Panc1 (cell line): ENCODE measurements at regions of chr14 and their contacts with region 1.

Region 1: DNA sequence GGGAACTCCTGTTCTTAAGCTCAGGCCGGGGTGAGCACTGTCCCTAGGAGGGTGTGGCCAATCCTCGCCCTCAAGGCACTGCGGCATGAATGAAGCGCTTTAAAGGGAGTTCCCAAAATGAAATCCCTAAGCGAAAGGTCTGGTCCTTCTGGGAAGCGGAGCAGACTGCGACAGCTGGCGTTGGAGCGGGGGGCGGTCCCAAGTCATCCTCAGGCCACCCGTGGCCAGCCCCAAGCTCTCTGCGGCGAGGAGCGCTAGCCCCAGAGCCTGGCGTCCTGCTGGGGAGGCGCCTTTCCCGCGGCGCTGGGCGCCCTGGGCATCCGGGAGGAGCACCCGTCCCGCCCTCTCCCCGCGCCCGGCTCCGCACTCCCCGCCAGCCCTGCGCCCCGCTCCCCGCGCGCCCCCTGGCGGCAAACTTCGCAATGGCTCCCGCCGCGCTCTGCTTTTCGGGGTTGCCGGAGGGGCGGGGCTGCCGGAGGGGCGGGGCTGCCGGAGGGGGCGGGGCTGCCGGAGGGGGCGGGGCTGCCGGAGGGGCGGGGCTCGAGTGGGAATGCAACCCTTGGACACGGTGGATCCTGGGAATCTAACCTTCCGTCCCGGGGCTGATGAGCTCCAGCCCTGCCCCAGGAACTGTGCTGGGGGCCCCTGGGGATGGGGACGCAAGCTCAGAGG is 25.4 kb downstream of the ZBTB42 start:
- DNase-seq: no peak
- ATAC-seq: peak; percentile 89
- H3K4me3 ChIP-seq: peak overlapping the region; percentile 51 to 60
- H3K27ac ChIP-seq: peak overlapping the region; percentile 70
- H3K4me1 ChIP-seq: 0 out of 2 replicates have a peak, but pooled peaks cover 3% of the 10 kb centered on the region
- H3K27me3 ChIP-seq: no peaks in the 10 kb centered on the region
- CTCF ChIP-seq: peak; percentile 92

Region 2: DNA sequence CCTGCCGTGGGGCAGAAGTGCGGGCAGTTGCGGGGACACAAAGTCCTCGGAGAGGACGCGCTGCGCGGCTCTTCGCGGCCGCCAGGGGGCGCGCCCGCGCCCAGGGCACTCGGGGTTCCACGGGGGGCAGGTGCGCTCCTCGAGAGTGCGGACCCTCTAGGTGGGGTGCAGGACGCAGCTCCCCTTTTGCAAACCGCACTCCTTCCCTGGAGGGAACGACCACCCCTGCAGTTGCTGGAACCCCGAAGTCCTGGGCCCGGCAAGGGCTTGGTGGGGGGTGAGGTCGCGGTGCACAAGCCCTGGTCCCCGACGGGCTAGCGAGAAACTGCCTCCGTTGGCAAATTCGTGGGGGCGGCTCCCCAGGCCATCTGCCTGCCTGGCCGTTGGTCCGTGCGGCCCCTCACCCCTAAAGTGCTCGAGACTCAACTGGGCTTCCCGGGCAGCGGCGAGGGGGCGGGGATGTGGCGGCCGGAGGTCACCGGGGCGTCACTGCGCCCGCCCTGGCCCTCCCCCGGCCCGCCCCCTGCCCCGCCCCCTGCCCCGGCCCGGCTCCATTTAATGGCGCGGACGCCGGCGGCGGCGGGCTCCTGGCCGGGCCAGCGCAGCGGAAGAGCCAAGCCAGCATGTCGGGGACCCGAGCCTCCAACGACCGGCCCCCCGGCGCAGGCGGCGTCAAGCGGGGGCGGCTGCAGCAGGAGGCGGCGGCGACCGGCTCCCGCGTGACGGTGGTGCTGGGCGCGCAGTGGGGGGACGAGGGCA is 102.5 kb before region 1 on chr14 and contains the start of gene ADSS1:
- CTCF ChIA-PET with region 1: no interaction called
- POLR2A ChIA-PET with region 1: no interaction called
- in situ Hi-C with region 1: no loop called
- intact Hi-C with region 1: no loop called
- DNase-seq: peak; percentile 24
- ATAC-seq: peak; percentile 59
- H3K4me3 ChIP-seq: peak within 1 kb of the TSS; percentile 42 to 52
- H3K27ac ChIP-seq: peak within 1 kb of the TSS; percentile 63
- H3K4me1 ChIP-seq: peaks cover 33% of the 10 kb centered on the region
- H3K27me3 ChIP-seq: no peaks in the 10 kb centered on the region
- CTCF ChIP-seq: peak; percentile 97
- total RNA-seq, gene ADSS1: 9.4 TPM

Region 3: DNA sequence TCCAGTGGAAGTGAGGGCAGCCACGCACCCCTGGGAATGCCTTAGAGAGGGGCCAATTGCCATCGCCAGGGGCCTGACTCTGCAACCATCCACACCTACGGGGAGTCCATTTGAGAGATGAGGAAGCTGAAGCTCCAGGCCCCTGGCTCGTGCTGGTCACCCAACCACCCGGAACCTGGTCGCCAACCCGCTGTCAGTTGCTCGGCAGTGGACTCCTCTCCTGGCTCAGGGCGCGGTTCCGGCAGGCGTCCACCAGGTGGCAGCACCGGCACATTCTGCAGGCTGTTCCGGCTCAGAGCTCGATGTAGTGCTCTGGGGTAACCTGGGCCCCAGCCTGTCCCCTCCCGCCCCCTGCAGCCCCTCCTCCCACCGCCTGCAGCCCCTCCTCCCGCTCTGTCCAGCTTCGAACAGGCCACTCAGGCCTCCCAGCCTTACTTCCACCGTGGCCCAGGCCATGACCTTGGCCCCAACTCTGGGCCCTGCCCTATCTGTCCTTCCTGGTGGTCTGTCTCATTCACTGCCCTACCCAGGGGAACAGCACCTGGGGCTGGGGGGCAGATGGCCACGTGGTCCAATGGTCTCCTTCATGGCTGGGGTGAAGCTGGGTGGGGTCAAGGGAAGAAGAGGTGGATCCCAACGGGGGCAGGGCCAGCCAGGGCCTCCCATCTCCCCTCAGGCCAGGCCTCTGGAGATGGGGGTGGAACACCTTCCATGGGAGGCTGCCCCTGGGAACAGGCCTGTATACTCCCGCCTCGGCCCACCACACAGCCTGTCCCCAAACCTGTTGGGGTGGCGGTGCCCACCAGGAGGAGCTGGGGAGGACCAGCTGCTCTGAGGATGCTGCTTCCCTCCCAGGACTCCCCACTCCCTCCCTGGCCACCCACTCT is 57.6 kb before region 1 on chr14:
- CTCF ChIA-PET with region 1: interaction called, 10 read pairs
- POLR2A ChIA-PET with region 1: interaction called, 5 read pairs
- in situ Hi-C with region 1: no loop called
- intact Hi-C with region 1: loop called (anchors 5 kb)
- DNase-seq: peak; percentile 45
- ATAC-seq: peak; percentile 87
- H3K4me3 ChIP-seq: no peak overlapping the region
- H3K27ac ChIP-seq: peak overlapping the region; percentile 69
- H3K4me1 ChIP-seq: peaks cover 18% of the 10 kb centered on the region
- H3K27me3 ChIP-seq: no peaks in the 10 kb centered on the region
- CTCF ChIP-seq: peak; percentile 89

Region 4: DNA sequence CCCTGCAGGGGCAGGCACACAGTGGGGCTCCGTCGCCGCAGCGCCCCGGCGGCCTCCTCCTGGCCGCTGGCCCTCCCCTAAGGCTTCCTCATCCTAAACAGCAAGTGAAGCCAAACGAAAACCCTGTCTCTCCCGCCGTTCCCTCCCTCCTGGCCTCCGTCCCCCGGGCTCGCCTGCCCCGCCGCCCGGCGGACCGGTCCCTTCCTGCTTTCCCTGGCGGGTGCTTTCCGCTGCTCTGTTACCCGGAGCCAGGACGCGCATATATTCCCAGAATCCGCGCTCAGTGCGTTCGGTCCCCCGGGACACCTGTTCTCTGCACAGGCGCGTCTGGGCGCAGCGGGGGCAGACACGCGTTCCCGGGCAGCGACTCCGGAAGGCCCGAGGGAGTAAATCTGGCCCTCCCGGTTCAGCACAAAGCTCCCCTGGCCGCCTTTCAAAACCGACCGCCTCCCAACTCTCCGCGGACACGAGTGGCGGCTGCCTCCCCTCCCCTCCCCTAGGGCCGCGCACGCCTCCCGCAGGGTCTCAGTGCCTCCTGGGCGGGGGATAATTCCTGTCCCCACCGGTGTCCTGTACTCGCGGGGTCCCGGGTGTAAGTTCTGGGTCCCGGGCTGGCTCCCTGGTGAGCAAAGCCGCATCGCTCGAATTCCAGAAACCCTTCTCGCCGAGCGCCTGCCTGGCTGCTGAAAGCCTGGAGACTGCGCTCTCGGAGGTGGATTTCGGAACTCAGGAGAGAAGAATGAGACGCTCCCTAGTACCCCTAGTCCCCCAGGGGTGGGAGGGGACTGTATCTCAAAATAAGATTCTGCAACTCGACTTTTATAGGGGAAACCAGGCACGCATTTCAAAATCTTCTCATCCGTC is 17.3 kb after region 1 on chr14:
- CTCF ChIA-PET with region 1: interaction called, 10 read pairs
- POLR2A ChIA-PET with region 1: no interaction called
- in situ Hi-C with region 1: no loop called
- intact Hi-C with region 1: no loop called
- DNase-seq: no peak
- ATAC-seq: peak; percentile 55
- H3K4me3 ChIP-seq: no peak overlapping the region
- H3K27ac ChIP-seq: no peak overlapping the region
- H3K4me1 ChIP-seq: no peaks in the 10 kb centered on the region
- H3K27me3 ChIP-seq: peaks cover 2% of the 10 kb centered on the region; the same call in 1 of the 2 replicates
- CTCF ChIP-seq: no peak